Activated CD4-positive, alpha-beta T cell treated with anti-CD3 and anti-CD28 coated beads, Interleukin-2, amount 10 ng/mL, durations not matched to agents 24 days and 14 days (primary cell): ENCODE measurements at regions of chr1 and their contacts with region 1.

Region 1: DNA sequence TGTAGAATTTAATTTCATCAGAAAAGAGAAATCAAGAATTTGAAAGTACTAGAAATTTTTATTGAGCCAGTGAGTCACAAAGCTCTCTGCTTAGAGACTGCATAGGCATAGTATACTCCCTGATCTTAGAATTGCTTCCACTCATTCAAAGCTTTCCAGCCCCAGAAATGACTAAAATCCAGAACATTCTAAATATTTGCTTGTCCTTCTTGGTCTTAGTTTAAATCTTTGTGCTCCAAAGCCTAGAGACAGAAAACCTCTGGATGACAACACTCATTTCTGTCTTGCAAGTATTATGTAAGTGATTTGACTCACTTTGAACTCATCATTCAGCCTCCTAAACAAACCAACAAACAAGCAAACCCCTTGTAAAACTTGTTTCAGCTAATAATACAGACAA is 74.2 kb downstream of the PTPRC start:
- DNase-seq: no peak
- H3K4me3 Mint-ChIP-seq: no peak overlapping the region
- H3K27ac Mint-ChIP-seq: peak overlapping the region; percentile 87
- H3K4me1 Mint-ChIP-seq: peaks cover 15% of the 10 kb centered on the region
- H3K27me3 Mint-ChIP-seq: no peaks in the 10 kb centered on the region

Region 2: DNA sequence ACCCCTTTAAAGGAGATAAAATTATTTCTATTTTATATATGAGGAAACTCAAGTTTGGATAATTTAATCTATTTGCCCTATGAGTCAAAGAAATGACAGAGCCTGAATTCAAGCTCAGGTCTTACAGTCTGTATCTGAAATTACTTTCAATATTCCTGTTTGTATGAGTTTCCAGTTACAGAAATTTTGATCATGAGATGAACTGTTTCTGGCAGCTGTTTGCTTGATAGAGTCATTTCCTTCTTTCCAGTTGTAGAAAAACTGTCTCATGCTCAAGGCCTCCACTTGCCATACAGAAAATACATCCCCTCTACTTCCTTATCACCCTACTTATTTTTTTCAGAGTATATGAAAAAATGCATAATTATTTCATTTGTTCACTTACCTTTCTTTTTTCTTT is 13.4 kb after region 1 on chr1:
- intact Hi-C with region 1: loop called (anchors 1 kb)
- DNase-seq: no peak
- H3K4me3 Mint-ChIP-seq: no peak overlapping the region
- H3K27ac Mint-ChIP-seq: peak overlapping the region; percentile 1
- H3K4me1 Mint-ChIP-seq: peaks cover 35% of the 10 kb centered on the region
- H3K27me3 Mint-ChIP-seq: no peaks in the 10 kb centered on the region

Region 3: DNA sequence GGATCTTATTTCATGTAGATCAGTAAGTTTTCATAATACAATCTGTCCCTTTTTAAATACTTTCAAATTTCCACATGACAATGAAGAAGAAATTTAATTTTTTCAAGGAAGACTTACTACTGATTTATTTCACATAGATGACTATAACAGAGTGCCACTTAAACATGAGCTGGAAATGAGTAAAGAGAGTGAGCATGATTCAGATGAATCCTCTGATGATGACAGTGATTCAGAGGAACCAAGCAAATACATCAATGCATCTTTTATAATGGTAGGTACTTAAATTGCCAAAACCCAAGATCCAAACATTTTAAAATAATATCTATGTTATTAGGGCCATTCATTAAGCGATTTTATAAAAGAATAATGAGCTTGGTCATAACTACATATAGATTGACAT is 36.2 kb after region 1 on chr1:
- intact Hi-C with region 1: loop called (anchors 5 kb)
- DNase-seq: no peak
- H3K4me3 Mint-ChIP-seq: no peak overlapping the region
- H3K27ac Mint-ChIP-seq: no peak overlapping the region
- H3K4me1 Mint-ChIP-seq: peaks cover 9% of the 10 kb centered on the region
- H3K27me3 Mint-ChIP-seq: no peaks in the 10 kb centered on the region

Region 4: DNA sequence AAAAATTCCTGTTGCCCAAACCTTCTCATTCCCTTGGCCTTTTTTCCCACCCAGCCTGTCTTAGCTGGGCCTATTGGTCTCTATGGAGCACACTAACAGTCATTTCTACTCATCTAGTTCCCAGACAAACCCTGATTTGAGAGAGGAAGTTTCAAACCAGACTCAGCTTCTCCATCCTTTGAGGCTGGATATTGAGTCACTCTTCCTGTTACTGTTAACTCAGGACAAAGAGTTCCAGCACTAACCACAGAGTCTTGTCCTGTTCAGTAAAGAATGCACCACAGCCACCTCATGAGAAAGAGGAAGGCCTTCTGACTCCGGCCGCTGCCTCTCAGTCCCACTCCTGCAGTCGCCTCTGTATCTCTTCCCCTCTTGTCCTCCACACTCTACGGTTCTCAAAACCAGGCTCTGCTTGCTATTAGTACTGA is 63.5 kb after region 1 on chr1:
- intact Hi-C with region 1: no loop called
- DNase-seq: no peak
- H3K4me3 Mint-ChIP-seq: no peak overlapping the region
- H3K27ac Mint-ChIP-seq: no peak overlapping the region
- H3K4me1 Mint-ChIP-seq: peaks cover 19% of the 10 kb centered on the region
- H3K27me3 Mint-ChIP-seq: no peaks in the 10 kb centered on the region